ENCODE measurements at regions of chr4 and their contacts with region 1.

Region 1: GRCh38 chr4:145180298-145181090 is at the start of gene OTUD4:
- DNase-seq: peak; percentile 94
- H3K4me3 Mint-ChIP-seq: peak within 1 kb of the TSS; percentile 96
- H3K27ac Mint-ChIP-seq: peak within 1 kb of the TSS; percentile 94
- H3K4me1 Mint-ChIP-seq: peaks cover 14% of the 10 kb centered on the region
- H3K27me3 Mint-ChIP-seq: no peaks in the 10 kb centered on the region
- total RNA-seq, gene OTUD4: 71.7 and 80.4 TPM in 2 replicates

Region 2: DNA sequence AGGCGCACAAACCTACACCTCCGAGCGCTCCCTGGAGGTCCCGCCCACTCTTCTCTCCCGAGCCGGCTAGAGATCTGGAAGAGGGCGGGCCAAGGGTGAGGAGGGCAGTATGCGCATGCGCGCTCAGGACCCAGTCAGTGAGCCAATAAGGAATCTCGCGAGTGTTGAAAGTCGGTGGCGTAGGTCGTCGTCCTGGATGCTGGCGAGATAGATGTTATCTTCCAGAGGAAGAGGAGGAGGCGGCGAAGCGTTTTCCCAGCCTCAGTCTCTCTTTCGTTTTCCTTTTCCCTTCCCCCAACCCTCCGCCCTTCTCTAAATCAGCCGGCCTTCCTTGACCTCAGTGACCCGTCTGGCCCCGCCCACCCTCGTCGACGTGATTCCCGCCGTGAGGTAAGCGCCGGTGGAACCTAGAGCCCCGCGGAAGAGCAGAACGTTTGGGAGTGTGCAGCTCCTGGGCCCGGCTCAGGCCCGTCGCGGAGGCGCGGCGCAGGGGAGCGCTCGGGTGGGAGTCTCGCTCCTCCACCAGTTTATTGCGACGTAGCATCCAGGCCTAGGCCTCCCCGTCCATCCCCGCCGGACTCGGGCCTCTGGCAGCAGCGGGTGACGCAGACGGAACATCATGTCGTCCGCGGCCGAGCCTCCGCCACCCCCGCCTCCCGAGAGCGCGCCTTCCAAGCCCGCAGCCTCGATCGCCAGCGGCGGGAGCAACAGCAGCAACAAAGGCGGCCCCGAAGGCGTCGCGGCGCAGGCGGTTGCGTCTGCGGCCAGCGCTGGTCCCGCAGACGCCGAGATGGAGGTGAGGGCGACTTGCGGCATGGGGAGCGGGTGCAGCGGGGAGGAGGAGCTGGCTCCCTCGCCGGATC is 1667.0 kb before region 1 on chr4 and contains the start of gene SMARCA5:
- intact Hi-C with region 1: loop called (anchors 1 kb)
- DNase-seq: peak; percentile 97
- H3K4me3 Mint-ChIP-seq: peak within 1 kb of the TSS; percentile 98
- H3K27ac Mint-ChIP-seq: peak within 1 kb of the TSS; percentile 90
- H3K4me1 Mint-ChIP-seq: peaks cover 23% of the 10 kb centered on the region
- H3K27me3 Mint-ChIP-seq: peaks cover 16% of the 10 kb centered on the region
- total RNA-seq, gene SMARCA5: 56.6 and 57.8 TPM in 2 replicates

Region 3: GRCh38 chr4:145097821-145098674 is 82.4 kb before region 1 on chr4 and contains the starts of genes ABCE1 and ANAPC10:
- intact Hi-C with region 1: loop called (anchors 1 kb)
- DNase-seq: peak; percentile 93
- H3K4me3 Mint-ChIP-seq: peak within 1 kb of the TSS; percentile 95
- H3K27ac Mint-ChIP-seq: peak within 1 kb of the TSS; percentile 99
- H3K4me1 Mint-ChIP-seq: peaks cover 25% of the 10 kb centered on the region
- H3K27me3 Mint-ChIP-seq: no peaks in the 10 kb centered on the region
- total RNA-seq, gene ABCE1: 162 and 173 TPM in 2 replicates
- total RNA-seq, gene ANAPC10: 28.0 and 29.4 TPM in 2 replicates

Region 4: DNA sequence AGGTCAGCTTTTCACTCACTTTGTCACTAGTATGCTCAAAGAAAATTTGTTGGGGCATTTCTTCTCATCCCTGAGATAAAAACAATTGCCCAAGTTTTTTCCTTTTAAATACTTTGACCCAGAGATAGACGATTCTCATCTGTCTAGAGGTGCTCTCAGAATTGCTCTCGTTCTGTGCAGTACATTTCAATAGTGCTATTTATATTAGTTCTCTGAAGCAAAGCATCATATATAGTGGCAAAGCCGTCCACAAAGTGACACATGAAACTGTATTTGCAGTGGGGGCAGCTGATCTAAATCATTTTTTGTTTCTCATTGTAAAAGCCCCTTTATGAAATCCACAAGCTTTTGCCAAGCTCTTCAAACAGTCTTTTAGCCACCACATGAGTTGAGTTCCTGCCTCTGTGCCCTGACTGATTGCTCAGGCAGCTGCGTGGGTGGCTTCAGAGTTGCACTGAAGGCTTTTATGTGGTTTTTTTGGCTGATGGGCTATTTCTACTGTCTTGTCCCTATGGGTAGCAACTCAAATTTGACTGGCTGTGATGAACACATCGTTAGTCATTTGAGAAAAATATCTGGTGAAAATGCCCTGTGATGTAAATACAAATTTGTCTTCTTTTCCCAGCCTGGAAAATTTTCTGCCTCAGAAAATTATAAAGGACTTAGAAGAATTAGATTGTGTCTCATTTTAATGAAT is 119.0 kb after region 1 on chr4:
- intact Hi-C with region 1: loop called (anchors 5 kb)
- DNase-seq: peak; percentile 21
- H3K4me3 Mint-ChIP-seq: no peak overlapping the region
- H3K27ac Mint-ChIP-seq: peak overlapping the region; percentile 53
- H3K4me1 Mint-ChIP-seq: peaks cover 14% of the 10 kb centered on the region
- H3K27me3 Mint-ChIP-seq: peaks cover 21% of the 10 kb centered on the region

Region 5: DNA sequence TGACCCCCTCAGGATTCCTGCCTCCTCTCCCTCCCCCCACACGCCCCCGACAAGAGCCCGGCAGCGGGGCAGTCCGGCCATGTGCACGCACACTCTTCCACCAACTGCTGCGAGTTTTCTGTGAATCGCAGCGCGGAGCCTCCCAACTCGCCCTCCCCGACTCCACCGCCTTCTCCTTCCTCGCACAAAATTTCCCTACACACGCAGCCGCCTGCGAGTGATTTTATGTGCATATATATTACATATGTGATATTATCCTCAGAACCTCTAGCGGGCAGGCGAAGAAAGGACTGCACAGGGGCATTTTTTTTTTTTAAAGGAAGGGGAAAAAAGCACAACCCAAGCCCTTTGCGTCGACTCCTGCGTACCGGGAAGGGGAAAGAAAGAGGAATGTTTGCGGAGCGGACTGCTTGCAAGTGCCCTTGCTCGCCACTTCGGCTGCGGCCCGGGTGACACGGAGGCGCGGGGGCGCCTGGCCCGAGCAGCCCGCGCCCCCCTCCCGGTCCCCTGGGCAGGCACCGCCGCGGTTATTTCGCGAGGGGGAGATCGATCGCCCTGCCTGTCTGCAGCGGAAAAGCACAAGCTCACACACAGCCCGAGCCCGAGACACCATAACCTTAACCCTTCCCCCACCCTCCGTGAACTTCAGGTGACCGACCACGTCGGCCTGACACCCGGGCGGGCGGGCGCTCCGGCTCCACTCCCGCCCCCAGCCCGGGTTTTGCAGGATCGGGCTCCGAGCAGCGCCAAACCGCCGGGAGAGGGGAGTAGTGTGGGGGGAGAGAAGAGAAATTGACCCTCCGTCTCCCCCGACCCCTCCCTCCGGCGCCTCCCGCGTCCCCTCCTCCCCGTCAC is 755.9 kb after region 1 on chr4:
- intact Hi-C with region 1: loop called (anchors 2 kb)
- DNase-seq: peak; percentile 58
- H3K4me3 Mint-ChIP-seq: peak overlapping the region; percentile 94
- H3K27ac Mint-ChIP-seq: peak overlapping the region; percentile 96
- H3K4me1 Mint-ChIP-seq: peaks cover 44% of the 10 kb centered on the region
- H3K27me3 Mint-ChIP-seq: no peaks in the 10 kb centered on the region